CD8-positive, alpha-beta memory T cell (primary cell): ENCODE measurements at regions of chr17 and their contacts with region 1.

Region 1: DNA sequence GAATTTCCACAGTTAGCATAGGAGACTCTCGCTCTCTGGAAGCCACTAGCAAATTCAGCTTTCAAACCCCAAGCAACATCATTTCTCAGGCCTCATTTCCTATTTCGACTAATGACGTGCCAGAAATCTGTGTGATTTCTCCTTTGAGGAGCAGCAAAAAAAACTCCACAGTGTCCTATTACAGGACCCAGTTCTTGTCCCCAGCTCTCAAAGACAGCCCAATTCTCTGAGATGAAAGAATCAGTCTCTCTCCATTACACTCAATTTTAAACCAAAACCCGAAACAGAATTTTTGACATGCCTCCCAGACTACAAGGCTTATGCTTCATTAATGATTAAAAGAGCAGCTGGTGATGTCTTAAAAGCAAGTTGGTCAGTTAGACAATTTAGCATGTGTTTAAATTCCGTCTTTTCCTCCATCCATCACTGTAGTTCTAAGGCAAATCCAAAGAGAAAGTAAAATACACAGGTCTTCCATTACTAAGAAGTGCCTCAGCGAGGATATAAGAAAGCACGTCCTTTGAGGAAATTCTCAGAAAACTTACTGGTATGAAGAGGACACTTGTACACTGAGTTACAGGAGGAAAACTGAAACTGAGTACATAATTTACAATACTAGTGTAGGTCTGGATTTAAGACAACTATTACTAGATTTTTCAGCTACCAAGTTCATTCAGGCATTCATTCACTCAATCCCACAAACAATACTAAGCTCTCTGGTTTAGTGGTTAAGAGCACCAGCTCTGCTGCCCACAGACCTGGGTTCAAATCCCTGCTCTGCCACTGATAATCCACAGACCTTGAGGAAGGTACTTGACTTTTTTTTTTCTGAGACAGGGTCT is 12.5 kb downstream of the TOM1L2 start:
- DNase-seq: peak in 1 of 5 donors; percentile 23
- H3K4me3 ChIP-seq: peak overlapping the region; percentile 24
- H3K4me3 Mint-ChIP-seq: peak overlapping the region; percentile 55 to 82 (median 77)
- H3K27ac ChIP-seq: peak overlapping the region; percentile 33
- H3K27ac Mint-ChIP-seq: peak overlapping the region; percentile 90 to 97 (median 95)
- H3K4me1 ChIP-seq: peaks cover 47% of the 10 kb centered on the region
- H3K4me1 Mint-ChIP-seq: peaks cover 51 to 74% (median 59%) of the 10 kb centered on the region in 3 donors
- H3K27me3 ChIP-seq: no peaks in the 10 kb centered on the region
- H3K27me3 Mint-ChIP-seq: no peaks in the 10 kb centered on the region

Region 2: GRCh38 chr17:17972126-17972951 is 12.6 kb after region 1 on chr17 and contains the starts of genes DRC3 and TOM1L2:
- CTCF ChIA-PET with region 1: interaction called, 7 read pairs
- POLR2A ChIA-PET with region 1: interaction called, 31 read pairs
- DNase-seq: peak; percentile 100
- H3K4me3 ChIP-seq: peak within 1 kb of the TSS; percentile 59
- H3K4me3 Mint-ChIP-seq: peak within 1 kb of the TSS; percentile 92 to 99 (median 97)
- H3K27ac ChIP-seq: peak within 1 kb of the TSS; percentile 79
- H3K27ac Mint-ChIP-seq: peak within 1 kb of the TSS; percentile 83 to 97 (median 96)
- H3K4me1 ChIP-seq: peaks cover 25% of the 10 kb centered on the region
- H3K4me1 Mint-ChIP-seq: peaks cover 27 to 50% (median 43%) of the 10 kb centered on the region in 3 donors
- H3K27me3 ChIP-seq: no peaks in the 10 kb centered on the region
- H3K27me3 Mint-ChIP-seq: peaks cover 0 to 2% of the 10 kb centered on the region in 2 donors
- total RNA-seq, gene DRC3: 0.33 to 0.60 TPM
- total RNA-seq, gene TOM1L2: 10.0 to 11.3 TPM

Region 3: DNA sequence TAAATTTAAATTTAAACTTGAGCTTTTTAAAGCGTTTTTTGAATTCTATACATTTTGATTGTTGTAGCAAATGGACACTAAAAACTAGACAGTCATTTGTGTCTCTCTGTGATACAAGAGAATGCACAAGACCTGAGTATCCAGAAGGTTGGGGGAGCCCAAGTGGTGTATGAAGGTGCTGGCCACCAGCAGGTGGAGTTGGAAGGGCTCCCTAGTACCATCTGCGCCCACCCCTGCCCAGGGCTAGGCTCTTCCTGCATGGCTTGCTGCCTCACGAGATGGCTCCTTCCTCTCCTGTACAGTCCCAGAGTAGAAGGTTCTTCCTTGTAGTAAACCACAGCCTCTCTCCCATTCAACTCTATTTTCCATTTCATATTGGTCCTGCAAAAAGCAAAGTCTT is 96.5 kb after region 1 on chr17:
- CTCF ChIA-PET with region 1: no interaction called
- POLR2A ChIA-PET with region 1: no interaction called
- DNase-seq: no peak
- H3K4me3 ChIP-seq: no peak overlapping the region
- H3K4me3 Mint-ChIP-seq: no peak overlapping the region
- H3K27ac ChIP-seq: no peak overlapping the region
- H3K27ac Mint-ChIP-seq: no peak overlapping the region
- H3K4me1 ChIP-seq: no peaks in the 10 kb centered on the region
- H3K4me1 Mint-ChIP-seq: no peaks in the 10 kb centered on the region
- H3K27me3 ChIP-seq: no peaks in the 10 kb centered on the region
- H3K27me3 Mint-ChIP-seq: no peaks in the 10 kb centered on the region